ENCODE measurements at regions of chr1 and their contacts with region 1.

Region 1: DNA sequence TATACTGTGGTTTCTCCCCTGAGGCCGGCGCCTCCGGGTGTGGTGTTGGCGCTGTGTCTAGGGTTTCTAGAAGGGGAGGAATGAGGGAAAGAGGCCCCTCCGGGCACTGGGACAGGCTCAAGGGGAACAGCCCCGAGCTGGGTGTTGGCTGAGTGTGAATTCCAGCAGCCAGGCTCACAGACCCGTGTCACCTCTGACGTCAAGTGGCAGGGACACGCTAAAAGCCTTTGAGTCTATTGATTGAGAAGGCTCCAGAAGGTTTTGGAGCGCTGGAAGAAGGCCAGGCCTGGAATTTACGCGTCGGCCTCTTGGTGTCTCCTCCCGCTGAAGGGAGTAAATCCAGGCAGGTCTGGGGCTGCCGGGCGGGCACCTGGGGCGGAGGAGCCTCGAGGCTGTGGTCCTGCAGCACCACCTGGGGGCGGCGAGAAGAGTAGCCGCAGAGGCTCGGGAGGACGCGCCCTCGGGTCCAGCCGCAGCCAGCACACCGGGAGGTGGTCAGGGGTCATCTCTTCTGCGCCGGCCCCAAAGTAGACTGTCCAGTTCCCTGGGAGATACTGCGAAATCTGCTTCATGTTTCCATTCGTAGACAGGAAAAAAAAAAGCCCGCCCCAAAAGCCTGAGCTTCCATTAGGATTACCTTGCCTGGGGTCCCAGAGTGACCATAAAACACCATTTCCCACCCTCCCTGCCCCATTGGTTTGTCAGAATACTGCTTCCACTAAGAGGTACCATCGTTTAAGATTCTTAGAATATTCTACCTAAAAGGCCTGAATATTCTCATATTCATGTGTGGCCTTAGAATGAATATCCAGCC is 61.7 kb downstream of the TLR5 start:
- DNase-seq: peak; percentile 77
- H3K4me3 ChIP-seq: no peak overlapping the region
- H3K27ac ChIP-seq: no peak overlapping the region
- H3K4me1 ChIP-seq: peaks cover 6% of the 10 kb centered on the region
- H3K27me3 ChIP-seq: peaks cover 0 to 1% of the 10 kb centered on the region in 2 experiments
- CTCF ChIP-seq: peak; percentile 91 to 96
- POLR2A ChIP-seq: no peak

Region 2: DNA sequence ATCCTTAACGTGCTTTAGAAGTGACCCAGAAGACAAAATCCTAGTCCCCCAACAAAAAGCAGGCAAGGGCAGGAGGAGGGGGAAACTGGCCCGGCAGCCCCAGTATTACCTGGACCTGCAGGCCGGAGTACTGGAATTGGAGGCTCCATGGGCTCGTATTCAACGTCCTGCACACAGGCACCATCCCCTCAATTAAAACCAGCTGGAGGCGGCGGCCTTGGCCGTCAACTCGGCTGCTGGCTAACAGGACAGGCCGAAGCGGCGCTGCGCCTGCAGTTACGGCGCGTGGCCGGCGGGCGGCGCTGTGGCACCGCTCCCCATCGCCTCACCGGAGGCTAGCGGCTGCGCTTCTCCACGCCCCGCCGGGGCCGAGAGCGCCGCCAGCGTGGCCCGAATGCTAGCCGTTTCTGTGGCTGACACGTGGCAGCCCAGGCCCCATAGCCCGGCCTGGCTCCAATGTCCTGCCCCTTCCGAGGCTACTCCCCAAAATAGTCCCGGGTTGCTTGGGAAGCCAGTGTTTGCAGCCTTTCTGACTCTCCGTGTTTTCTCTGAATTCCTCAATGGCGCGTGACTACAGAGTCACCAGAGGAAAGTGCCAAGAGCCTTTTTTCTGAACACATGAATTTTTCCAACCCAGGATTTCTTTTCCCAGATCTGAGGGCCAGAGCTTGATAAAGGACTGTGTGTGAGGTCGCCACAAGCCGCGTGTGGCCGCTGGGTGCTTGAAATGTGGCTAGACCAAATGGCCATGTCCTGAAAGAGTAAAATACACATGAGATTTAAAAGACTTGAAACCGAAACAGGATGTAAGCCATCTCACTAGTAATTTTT is 616.0 kb before region 1 on chr1:
- CTCF ChIA-PET with region 1: no interaction called
- POLR2A ChIA-PET with region 1: no interaction called
- dilution Hi-C with region 1: no loop called
- intact Hi-C with region 1: loop called (anchors 1 kb)
- DNase-seq: peak; percentile 97
- H3K4me3 ChIP-seq: peak overlapping the region; percentile 49 to 71 (median 53)
- H3K27ac ChIP-seq: peak overlapping the region; percentile 83
- H3K4me1 ChIP-seq: peaks cover 2% of the 10 kb centered on the region
- H3K27me3 ChIP-seq: peaks cover 6 to 7% of the 10 kb centered on the region in 2 experiments
- CTCF ChIP-seq: peak; percentile 95 to 100
- POLR2A ChIP-seq: peak; percentile 80

Region 3: DNA sequence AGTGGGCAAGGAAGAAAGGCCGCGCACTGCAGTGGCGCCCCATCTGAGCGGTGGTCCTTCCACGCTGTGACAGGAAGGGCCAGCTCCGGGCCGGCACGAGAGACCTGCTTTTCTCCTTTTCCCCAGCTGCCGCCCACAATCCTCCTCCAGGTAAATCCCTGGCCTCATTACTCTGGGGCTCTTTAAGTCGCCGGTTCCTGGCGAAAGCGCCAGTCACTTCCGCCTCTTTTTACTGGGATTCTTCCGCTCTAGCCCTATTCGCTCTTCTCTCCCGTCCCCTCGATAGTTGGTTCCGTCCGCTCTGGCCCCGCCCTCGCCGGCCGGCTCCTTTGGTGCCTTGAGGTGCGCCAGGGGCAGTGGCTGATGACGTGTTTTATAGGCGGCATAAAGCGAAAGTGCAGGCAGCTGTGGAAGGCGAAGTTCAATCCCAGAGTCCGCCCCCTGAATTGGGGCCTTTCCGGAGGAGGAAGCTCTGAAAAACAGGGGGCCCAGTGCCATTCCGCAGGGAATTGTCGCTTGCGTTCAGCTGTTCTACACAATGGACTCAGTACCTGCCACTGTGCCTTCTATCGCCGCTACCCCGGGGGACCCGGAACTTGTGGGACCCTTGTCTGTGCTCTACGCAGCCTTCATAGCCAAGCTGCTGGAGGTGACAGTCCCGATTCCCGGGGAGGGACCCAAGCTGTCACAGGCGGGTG is 437.3 kb before region 1 on chr1:
- CTCF ChIA-PET with region 1: no interaction called
- POLR2A ChIA-PET with region 1: no interaction called
- dilution Hi-C with region 1: no loop called
- intact Hi-C with region 1: loop called (anchors 1 kb)
- DNase-seq: peak; percentile 99
- H3K4me3 ChIP-seq: peak overlapping the region; percentile 42 to 98 (median 72)
- H3K27ac ChIP-seq: peak overlapping the region; percentile 93
- H3K4me1 ChIP-seq: peaks cover 13% of the 10 kb centered on the region
- H3K27me3 ChIP-seq: no peaks in the 10 kb centered on the region
- CTCF ChIP-seq: no peak
- POLR2A ChIP-seq: peak; percentile 78

Region 4: DNA sequence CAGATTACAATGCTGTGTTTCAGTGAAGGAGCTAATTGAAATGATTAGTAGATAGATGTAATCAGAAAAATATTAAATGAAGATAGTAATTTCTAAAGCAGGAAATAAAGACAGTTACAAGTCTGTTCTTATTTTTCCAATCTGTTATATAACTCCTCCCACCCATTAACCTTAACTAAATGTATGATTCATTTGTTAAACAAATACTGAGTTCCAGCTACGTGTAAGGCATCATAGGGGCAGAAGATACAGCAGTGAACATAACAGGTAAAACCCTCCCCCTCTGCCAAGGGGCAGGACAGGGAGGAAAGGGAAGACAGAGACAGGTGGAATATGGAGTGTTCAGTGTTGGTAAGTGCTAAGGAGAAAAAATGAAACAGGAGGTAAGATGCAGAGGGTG is 344.4 kb before region 1 on chr1 and contains the start of gene FAM177B:
- CTCF ChIA-PET with region 1: interaction called, 39 read pairs
- POLR2A ChIA-PET with region 1: no interaction called
- dilution Hi-C with region 1: no loop called
- intact Hi-C with region 1: loop called (anchors 1 kb)
- DNase-seq: no peak
- H3K4me3 ChIP-seq: no peak within 1 kb of the TSS
- H3K27ac ChIP-seq: no peak within 1 kb of the TSS
- H3K4me1 ChIP-seq: no peaks in the 10 kb centered on the region
- H3K27me3 ChIP-seq: no peaks in the 10 kb centered on the region
- CTCF ChIP-seq: no peak
- POLR2A ChIP-seq: no peak
- total RNA-seq, gene FAM177B: not detected in 2 replicates

Region 5: GRCh38 chr1:222994506-222995235 is 86.7 kb before region 1 on chr1:
- CTCF ChIA-PET with region 1: interaction called, 4 read pairs
- POLR2A ChIA-PET with region 1: no interaction called
- dilution Hi-C with region 1: no loop called
- intact Hi-C with region 1: loop called (anchors 2 kb)
- DNase-seq: peak; percentile 79
- H3K4me3 ChIP-seq: peak overlapping the region in 1 of 3 experiments; percentile 52
- H3K27ac ChIP-seq: peak overlapping the region; percentile 81
- H3K4me1 ChIP-seq: peaks cover 36% of the 10 kb centered on the region
- H3K27me3 ChIP-seq: no peaks in the 10 kb centered on the region
- CTCF ChIP-seq: no peak
- POLR2A ChIP-seq: no peak

Region 6: DNA sequence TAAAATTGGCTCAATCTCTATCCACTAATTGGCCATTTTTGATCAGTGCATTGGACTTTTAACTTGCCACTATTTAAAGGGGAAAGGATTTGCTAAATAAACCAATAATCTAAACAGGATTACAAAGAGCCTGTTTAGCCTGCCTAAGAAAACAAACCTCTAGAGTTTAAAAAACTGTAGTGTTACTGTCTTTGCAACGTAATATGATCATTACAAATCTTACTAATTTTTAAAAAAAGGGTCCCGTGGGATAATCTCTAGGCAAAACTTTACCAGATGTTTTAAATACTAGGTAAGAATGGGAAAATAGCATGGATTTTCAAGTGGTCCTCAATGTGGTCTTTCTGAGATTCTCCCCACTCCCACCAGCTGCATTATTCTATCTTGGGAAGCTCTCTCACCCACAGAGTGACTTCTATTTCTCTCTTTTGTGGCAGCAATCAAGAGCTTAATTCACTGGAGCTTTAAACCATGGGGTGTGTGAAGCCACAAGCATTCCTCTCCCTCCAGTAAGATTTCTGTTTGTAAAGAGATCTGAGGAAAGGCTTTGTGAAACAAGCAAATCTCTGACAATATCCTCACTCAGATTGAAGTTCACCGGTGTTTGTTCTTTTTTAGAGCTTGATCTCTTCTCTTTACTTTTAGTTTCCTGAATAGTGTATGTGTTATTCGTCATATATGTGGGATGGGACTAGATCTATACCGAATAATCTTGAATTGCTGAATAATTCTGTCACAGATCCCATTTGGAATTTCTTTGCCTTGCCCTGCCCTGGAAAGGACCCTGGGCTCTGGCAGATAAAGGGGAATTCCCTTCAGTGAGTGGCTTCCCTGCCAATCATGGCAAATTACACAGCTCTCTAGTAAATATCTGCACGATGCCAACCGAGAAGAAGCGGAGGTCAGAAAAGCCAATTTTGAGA is 70.5 kb before region 1 on chr1:
- CTCF ChIA-PET with region 1: no interaction called
- POLR2A ChIA-PET with region 1: no interaction called
- dilution Hi-C with region 1: no loop called
- intact Hi-C with region 1: no loop called
- DNase-seq: no peak
- H3K4me3 ChIP-seq: no peak overlapping the region
- H3K27ac ChIP-seq: no peak overlapping the region
- H3K4me1 ChIP-seq: no peaks in the 10 kb centered on the region
- H3K27me3 ChIP-seq: no peaks in the 10 kb centered on the region
- CTCF ChIP-seq: no peak
- POLR2A ChIP-seq: no peak

Region 7: GRCh38 chr1:224127925-224128819 is 1046.8 kb after region 1 on chr1:
- CTCF ChIA-PET with region 1: no interaction called
- POLR2A ChIA-PET with region 1: no interaction called
- dilution Hi-C with region 1: no loop called
- intact Hi-C with region 1: no loop called
- DNase-seq: no peak
- H3K4me3 ChIP-seq: no peak overlapping the region
- H3K27ac ChIP-seq: no peak overlapping the region
- H3K4me1 ChIP-seq: peaks cover 3% of the 10 kb centered on the region
- H3K27me3 ChIP-seq: no peaks in the 10 kb centered on the region
- CTCF ChIP-seq: no peak
- POLR2A ChIP-seq: no peak

Measured in endothelial cell of umbilical vein (primary cell).